Activated CD4-positive, alpha-beta T cell treated with anti-CD3 and anti-CD28 coated beads for 36 hours (primary cell): ENCODE measurements at regions of chr3 and their contacts with region 1.

Region 1: DNA sequence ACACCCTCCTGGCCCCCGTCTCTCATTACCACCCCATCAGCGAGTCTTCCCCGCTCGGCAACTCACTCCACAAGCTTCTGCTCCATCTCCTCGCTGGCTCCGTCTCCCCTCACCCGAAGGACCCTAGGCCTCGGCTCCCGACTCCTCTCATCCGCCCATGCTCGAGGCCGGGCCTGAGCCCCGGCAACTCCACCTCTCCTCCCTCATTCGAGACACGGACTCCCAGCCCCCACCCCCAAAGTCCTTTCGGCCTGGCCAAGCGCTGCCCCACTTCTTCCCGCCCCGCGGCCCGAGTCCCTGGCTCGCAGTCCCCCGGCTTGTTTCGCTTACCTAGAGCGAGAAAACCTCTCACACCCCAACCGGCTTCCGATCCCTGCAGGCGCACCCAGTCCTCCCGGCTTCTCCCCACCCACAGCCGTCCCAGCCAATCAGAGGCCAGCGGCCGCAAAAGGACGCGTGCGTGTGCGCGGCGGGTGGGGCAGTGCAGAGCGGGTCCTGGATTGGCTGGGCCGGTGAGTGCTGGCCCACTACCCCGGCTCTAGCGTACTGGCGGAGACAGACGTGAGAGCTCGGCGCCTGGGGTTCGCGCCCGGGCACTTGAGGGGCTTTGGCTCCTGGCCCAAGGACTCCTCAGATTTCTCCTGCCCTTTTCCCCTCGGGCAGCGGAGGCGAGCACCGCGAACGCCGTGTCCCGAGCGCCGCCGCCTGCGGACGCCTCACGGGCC is at the start of gene HIGD1A:
- DNase-seq: peak; percentile 97
- ATAC-seq: peak; percentile 99
- H3K4me3 Mint-ChIP-seq: peak within 1 kb of the TSS; percentile 91
- H3K27ac Mint-ChIP-seq: peak within 1 kb of the TSS; percentile 86
- H3K4me1 Mint-ChIP-seq: peaks cover 41% of the 10 kb centered on the region
- H3K27me3 Mint-ChIP-seq: peaks cover 6% of the 10 kb centered on the region
- total RNA-seq, gene HIGD1A: 74.9 to 77.8 TPM

Region 2: GRCh38 chr3:42581709-42582473 is 222.4 kb before region 1 on chr3 and contains the start of gene SEC22C:
- CTCF ChIA-PET with region 1: no interaction called
- POLR2A ChIA-PET with region 1: no interaction called
- intact Hi-C with region 1: loop called in 1 of 2 experiments (anchors 1 kb)
- DNase-seq: peak; percentile 98
- ATAC-seq: peak; percentile 94
- H3K4me3 Mint-ChIP-seq: peak within 1 kb of the TSS; percentile 81
- H3K27ac Mint-ChIP-seq: peak within 1 kb of the TSS; percentile 94
- H3K4me1 Mint-ChIP-seq: peaks cover 43% of the 10 kb centered on the region
- H3K27me3 Mint-ChIP-seq: no peaks in the 10 kb centered on the region
- total RNA-seq, gene SEC22C: 34.2 to 42.5 TPM

Region 3: GRCh38 chr3:42660893-42661292 is 143.4 kb before region 1 on chr3:
- CTCF ChIA-PET with region 1: no interaction called
- POLR2A ChIA-PET with region 1: no interaction called
- intact Hi-C with region 1: no loop called
- DNase-seq: peak; percentile 39
- ATAC-seq: peak; percentile 66
- H3K4me3 Mint-ChIP-seq: no peak overlapping the region
- H3K27ac Mint-ChIP-seq: no peak overlapping the region
- H3K4me1 Mint-ChIP-seq: no peaks in the 10 kb centered on the region
- H3K27me3 Mint-ChIP-seq: no peaks in the 10 kb centered on the region

Region 4: DNA sequence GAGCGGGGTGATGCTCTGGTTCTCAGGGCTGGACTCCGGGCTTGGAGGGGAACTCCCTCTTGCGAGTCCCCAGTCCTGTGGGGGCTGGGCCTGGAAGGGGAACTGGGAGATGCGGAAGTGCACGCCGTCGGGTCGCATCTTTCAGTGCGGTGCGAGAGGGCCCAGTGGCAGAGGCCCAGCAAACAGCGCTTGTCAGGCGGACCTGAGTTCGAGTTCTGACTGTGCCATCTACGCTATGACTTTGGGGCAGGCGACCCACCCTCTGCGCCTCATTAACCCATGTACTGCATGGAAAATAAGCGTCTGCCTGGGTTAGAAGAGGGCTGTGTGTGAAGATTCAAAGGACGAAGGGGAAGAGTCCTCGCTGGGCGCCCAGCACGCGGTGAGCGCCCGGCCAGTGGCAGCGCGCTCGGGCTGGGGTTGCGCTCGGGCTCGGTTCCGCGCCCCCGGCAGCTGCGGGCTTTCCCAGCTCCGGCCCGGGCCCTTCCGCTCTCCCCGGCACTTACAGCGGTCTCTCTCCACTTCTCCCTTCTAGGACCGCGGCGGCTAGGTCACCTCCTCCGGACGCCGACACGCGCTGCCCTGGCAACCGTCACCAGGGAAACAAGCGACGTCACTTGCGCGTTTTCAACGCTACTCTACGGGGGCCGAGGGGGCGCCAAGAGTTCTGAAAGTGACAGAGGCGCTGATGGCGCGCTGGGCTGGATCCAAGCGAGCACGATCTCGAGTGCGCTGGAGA is 31.4 kb before region 1 on chr3 and contains the start of gene CCDC13:
- CTCF ChIA-PET with region 1: interaction called, 3 read pairs
- POLR2A ChIA-PET with region 1: no interaction called
- intact Hi-C with region 1: loop called (anchors 1 to 2 kb)
- DNase-seq: peak; percentile 96
- ATAC-seq: peak; percentile 96
- H3K4me3 Mint-ChIP-seq: peak within 1 kb of the TSS; percentile 83
- H3K27ac Mint-ChIP-seq: peak within 1 kb of the TSS; percentile 82
- H3K4me1 Mint-ChIP-seq: peaks cover 12% of the 10 kb centered on the region
- H3K27me3 Mint-ChIP-seq: no peaks in the 10 kb centered on the region
- total RNA-seq, gene CCDC13: 0.46 to 0.63 TPM

Region 5: GRCh38 chr3:42880601-42881451 is 76.6 kb after region 1 on chr3:
- CTCF ChIA-PET with region 1: interaction called, 3 read pairs
- POLR2A ChIA-PET with region 1: no interaction called
- intact Hi-C with region 1: loop called (anchors 1 to 2 kb)
- DNase-seq: peak; percentile 95
- ATAC-seq: peak; percentile 99
- H3K4me3 Mint-ChIP-seq: peak overlapping the region; percentile 66
- H3K27ac Mint-ChIP-seq: peak overlapping the region; percentile 82
- H3K4me1 Mint-ChIP-seq: peaks cover 7% of the 10 kb centered on the region
- H3K27me3 Mint-ChIP-seq: no peaks in the 10 kb centered on the region